ENCODE measurements at regions of chr4 and their contacts with region 1.

Region 1: DNA sequence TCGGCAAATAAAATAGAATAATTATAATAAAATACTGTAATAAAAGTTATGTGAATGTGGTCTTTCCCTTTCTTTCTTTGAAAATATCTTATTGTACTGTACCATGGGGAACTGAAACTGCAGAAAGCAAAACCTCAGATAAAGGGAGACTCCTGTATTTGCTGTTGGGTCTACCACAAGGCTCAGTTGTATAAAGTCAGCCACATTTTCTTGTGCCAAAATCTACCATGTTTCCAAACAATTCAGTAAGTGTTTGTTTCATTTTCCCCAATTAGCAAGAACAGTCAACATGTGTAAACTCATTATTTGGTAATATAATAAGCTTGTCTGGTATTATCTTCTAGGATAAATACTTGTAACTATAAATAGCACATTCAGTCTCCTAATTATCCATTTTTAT is 14.8 kb upstream of the OTUD4 start:
- DNase-seq: no peak
- H3K4me3 ChIP-seq: peak overlapping the region; percentile 35; the same call in 1 of the 2 replicates
- H3K27ac ChIP-seq: peak overlapping the region; percentile 89
- H3K4me1 ChIP-seq: peaks cover 7% of the 10 kb centered on the region
- H3K27me3 ChIP-seq: no peaks in the 10 kb centered on the region
- CTCF ChIP-seq: no peak

Region 2: DNA sequence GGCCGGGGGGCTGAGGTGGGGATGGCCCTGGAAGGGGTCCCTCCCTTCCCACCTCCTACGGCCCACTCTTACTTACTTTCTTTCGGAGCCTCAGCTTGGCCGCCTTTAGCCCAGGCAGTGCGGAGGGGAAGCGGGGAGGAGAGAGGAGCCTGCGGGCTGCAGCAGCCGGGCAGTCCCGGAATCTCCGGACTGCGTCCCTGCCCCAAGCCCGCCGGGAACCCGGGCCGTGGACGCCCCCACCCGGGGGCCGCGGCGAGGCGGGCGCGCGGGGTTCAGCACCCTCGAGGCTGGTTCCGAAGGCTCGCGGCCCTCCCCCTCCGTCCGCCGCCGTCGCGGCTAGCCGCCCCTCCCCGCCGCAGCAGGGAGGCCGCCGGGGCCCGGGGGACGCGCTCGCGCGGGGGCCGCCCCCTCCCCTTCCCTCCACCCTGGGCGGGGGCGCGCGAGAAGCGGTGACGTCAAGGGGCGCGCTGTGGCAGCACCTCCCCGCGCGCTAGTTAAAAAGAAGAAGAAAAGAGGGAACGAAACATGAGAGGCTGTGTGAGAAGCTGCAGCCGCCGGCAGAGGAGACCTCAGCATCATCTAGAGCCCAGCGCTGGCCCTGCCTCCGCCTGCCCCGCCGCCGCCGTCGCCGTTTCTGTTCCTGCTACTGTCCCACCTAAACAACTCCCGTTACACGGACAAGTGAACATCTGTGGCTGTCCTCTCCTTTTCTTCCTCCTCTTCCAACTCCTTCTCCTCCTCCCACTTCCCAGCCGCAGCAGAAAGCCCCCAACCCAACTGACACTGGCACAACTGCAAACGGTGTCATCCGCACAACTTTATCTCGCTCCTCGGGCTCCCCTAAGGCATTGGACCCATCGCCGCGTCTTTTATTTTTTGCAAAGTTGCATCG is 549.3 kb before region 1 on chr4 and contains the start of gene HHIP:
- CTCF ChIA-PET with region 1: no interaction called
- POLR2A ChIA-PET with region 1: no interaction called
- intact Hi-C with region 1: no loop called
- DNase-seq: no peak
- H3K4me3 ChIP-seq: no peak within 1 kb of the TSS
- H3K27ac ChIP-seq: no peak within 1 kb of the TSS
- H3K4me1 ChIP-seq: no peaks in the 10 kb centered on the region
- H3K27me3 ChIP-seq: no peaks in the 10 kb centered on the region
- CTCF ChIP-seq: no peak
- total RNA-seq, gene HHIP: 0.05 TPM in 1 of 2 replicates, not detected in the other

Region 3: GRCh38 chr4:145180298-145181090 is 14.7 kb before region 1 on chr4 and contains the start of gene OTUD4:
- CTCF ChIA-PET with region 1: no interaction called
- POLR2A ChIA-PET with region 1: interaction called, 16 read pairs
- intact Hi-C with region 1: loop called (anchors 1 kb)
- DNase-seq: peak; percentile 71 to 94
- H3K4me3 ChIP-seq: peak within 1 kb of the TSS; percentile 95
- H3K27ac ChIP-seq: peak within 1 kb of the TSS; percentile 79
- H3K4me1 ChIP-seq: peaks cover 14% of the 10 kb centered on the region
- H3K27me3 ChIP-seq: no peaks in the 10 kb centered on the region
- CTCF ChIP-seq: no peak
- total RNA-seq, gene OTUD4: 43.5 and 44.2 TPM in 2 replicates